Vagina (tissue), 2 donors: ENCODE measurements at regions of chr6 and their contacts with region 1.

Region 1: DNA sequence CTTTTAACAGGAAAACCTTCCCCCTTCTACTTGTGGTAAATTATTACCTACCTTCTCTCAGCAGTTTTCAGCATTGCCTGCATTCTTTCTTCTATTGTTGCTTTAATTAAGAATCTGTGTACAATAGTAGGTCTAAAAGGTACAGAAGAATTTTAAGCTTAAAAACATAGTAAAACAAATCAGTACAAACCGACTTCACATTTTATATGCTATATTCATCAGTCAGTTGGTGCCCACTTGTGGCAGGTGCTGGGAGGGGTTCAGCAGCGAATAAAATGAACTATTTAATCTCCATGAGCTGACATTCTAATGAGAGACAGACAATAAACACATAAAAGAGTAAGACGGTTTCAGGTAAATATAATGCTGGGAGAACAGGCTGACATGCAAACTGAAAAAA is 73.4 kb upstream of the FBXO30 start:
- DNase-seq: no peak
- H3K4me3 ChIP-seq: no peak overlapping the region
- H3K27ac ChIP-seq: no peak overlapping the region
- H3K4me1 ChIP-seq: no peaks in the 10 kb centered on the region
- H3K27me3 ChIP-seq: no peaks in the 10 kb centered on the region
- CTCF ChIP-seq: no peak
- POLR2A ChIP-seq: no peak

Region 2: DNA sequence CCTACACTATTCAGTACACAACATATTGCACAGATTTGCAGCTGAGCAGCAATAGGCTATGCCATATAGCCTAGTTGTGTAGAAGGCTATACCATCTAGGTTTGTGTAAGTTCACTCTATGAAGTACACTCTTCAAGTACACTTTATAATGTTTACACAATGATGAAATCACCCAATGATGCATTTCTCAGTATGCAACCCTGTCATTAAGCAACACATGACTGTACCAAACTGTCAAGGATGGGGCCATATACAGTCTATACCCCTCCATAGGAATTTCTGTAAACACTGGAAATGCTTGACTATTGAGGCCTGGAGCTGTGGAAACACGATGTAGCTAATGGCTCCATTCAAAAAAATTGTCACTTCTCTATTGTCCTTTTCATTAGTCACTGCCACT is 688.0 kb before region 1 on chr6:
- intact Hi-C with region 1: loop called (anchors 5 kb)
- DNase-seq: no peak
- H3K4me3 ChIP-seq: no peak overlapping the region
- H3K27ac ChIP-seq: no peak overlapping the region
- H3K4me1 ChIP-seq: no peaks in the 10 kb centered on the region
- H3K27me3 ChIP-seq: no peaks in the 10 kb centered on the region
- CTCF ChIP-seq: no peak
- POLR2A ChIP-seq: no peak